Psoas muscle (tissue), 8 donors: ENCODE measurements at regions of chr17 and their contacts with region 1.

Region 1: GRCh38 chr17:1399679-1400512 is at the start of gene YWHAE:
- DNase-seq: peak; percentile 99
- ATAC-seq: peak; percentile 94 to 97 (median 96)
- H3K4me3 ChIP-seq: peak within 1 kb of the TSS; percentile 88
- H3K27ac ChIP-seq: peak within 1 kb of the TSS; percentile 93
- H3K4me1 ChIP-seq: peaks cover 30% of the 10 kb centered on the region
- H3K27me3 ChIP-seq: no peaks in the 10 kb centered on the region
- CTCF ChIP-seq: no peak
- total RNA-seq, gene YWHAE: 641 to 874 (median 838) TPM

Region 2: GRCh38 chr17:1365445-1366039 is 34.4 kb before region 1 on chr17:
- intact Hi-C with region 1: loop called (anchors 5 kb)
- DNase-seq: no peak
- ATAC-seq: peak; percentile 69 to 78 (median 76)
- H3K4me3 ChIP-seq: peak overlapping the region; percentile 31
- H3K27ac ChIP-seq: peak overlapping the region; percentile 65
- H3K4me1 ChIP-seq: peaks cover 86% of the 10 kb centered on the region
- H3K27me3 ChIP-seq: no peaks in the 10 kb centered on the region
- CTCF ChIP-seq: peak; percentile 90

Region 3: DNA sequence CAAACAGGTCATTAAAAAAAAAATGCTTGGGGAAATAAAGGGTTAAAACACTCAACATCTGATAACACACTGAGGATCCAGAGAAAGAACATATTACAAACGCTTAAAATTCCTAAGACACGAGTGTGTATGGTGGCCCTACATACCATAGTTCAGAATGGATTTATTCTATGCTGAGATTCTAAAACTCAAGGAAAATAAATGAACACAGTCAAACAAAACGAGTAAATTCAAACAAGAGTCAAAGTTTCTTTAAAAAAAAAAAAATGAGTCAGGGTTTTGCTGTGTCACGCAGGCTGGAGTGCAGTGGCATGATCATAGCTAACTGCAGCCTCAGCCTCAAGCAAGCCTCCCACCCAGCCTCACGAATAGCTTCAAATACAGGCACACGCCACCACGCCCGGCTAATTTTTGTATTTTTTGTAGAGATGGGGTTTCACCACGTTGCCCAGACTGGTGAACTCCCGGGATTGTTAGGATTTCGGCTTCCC is 38.7 kb after region 1 on chr17:
- intact Hi-C with region 1: no loop called
- DNase-seq: no peak
- ATAC-seq: peak in 3 of 4 donors; percentile 64 to 73 (median 64)
- H3K4me3 ChIP-seq: no peak overlapping the region
- H3K27ac ChIP-seq: peak overlapping the region; percentile 25
- H3K4me1 ChIP-seq: peaks cover 11% of the 10 kb centered on the region
- H3K27me3 ChIP-seq: no peaks in the 10 kb centered on the region
- CTCF ChIP-seq: no peak